ENCODE measurements at regions of chr17 and their contacts with region 1.

Region 1: DNA sequence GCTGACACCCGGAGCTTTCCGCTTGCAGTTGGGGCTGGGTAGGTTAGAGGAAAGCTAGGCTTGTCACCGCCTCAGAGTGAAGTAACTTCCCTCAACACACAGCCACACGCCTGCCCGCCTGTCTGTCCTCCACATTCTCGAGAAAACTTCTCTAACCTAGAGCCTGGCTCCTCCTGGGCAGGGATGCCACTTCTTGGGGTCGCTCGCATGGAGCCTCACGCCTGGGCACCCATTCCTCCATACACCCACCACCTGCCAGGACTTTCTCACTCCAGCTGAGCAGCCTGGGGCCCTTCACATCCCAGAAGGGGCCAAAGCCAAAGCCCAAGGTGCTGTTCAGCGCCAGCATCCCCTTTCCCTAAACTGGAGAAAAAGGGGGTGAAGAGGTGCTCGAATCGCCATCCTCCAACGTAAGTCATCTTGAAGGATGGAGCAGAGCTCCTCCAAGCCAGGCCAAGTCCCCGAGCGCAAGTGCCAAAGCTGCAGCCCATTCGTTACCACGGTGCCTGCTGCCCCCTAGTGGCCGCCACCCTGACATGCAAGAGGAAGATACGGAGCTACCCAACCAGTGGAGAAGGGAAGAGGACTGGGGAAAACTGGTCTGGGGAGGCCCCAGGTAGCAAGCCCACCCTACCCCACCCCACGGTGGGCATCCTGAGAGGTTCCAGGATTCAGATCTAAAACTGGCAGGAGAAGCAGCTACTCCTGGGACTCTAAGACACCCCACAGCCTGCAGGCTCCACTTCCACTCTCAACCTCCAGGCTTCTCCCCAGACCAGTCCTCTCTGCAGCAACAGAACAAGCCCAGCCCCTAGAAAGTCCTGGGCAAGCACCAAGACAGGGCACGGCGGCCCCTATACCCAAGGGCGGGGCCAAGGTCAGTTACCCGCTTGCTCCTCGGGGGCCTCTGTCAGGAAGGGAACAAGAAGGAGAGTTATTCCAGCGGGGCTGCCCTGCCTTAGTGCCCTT is 63.1 kb downstream of the MYO18A start:
- DNase-seq: peak; percentile 93
- ATAC-seq: peak; percentile 72
- H3K4me3 Mint-ChIP-seq: no peak overlapping the region
- H3K27ac Mint-ChIP-seq: no peak overlapping the region
- H3K4me1 Mint-ChIP-seq: peaks cover 9% of the 10 kb centered on the region
- H3K27me3 Mint-ChIP-seq: no peaks in the 10 kb centered on the region
- CTCF ChIP-seq: peak; percentile 98

Region 2: GRCh38 chr17:28726226-28727130 is 390.6 kb before region 1 on chr17 and contains the start of gene TLCD1:
- CTCF ChIA-PET with region 1: interaction called, 47 read pairs
- POLR2A ChIA-PET with region 1: interaction called, 3 read pairs
- DNase-seq: peak; percentile 99
- ATAC-seq: peak; percentile 29
- H3K4me3 Mint-ChIP-seq: peak within 1 kb of the TSS; percentile 93
- H3K27ac Mint-ChIP-seq: peak within 1 kb of the TSS; percentile 99
- H3K4me1 Mint-ChIP-seq: peaks cover 44% of the 10 kb centered on the region
- H3K27me3 Mint-ChIP-seq: no peaks in the 10 kb centered on the region
- CTCF ChIP-seq: peak; percentile 96
- total RNA-seq, gene TLCD1: 36.0 to 41.2 TPM (median 36.5 TPM) in 3 replicates

Region 3: DNA sequence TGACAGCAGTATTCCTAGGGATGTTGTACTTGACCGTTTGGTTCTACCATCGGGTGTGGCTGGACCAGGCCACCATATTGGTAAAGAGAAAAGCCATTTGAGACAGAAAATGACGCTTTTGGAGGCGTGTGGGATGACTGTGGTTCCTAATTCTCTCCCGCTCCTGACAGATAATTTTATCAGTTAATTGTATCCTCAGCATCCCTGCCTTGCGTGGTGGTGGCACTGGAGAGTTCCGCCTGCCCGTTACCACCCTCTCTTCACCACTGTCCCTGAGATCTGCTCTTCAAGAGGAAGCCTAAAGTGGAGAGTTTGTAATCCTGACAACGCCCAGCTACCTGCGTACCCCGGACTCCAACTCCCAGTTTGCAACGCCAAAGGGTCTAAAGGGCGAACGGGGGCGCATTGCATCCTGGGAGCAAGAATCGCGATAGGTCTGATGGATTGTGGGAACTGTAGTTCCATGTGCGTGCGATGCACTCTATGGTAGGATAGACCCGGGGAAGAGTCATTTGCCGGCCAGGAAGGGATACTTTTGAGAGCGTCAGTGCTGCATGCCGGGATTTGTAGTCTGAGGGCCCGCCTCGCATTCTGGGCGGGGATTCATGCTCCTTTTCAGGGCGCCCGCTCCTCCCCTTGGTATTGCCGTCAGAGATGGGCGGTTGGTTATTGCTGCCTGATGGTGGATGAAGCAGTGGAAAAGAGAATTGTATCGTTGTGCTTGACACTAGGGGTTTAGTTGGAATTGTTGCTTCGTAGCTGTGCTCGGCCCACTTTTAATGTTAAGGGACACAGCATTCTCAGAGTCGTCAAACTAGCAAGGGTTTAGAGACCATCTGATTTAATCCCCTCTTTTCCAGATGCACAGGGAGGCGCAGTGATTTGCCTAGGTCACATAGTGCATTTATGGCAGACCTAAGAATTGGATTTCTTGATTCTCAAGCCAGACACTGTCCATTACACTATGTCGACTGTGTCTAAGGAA is 164.8 kb before region 1 on chr17:
- CTCF ChIA-PET with region 1: interaction called, 762 read pairs
- POLR2A ChIA-PET with region 1: no interaction called
- DNase-seq: peak; percentile 94
- ATAC-seq: peak; percentile 74
- H3K4me3 Mint-ChIP-seq: no peak overlapping the region
- H3K27ac Mint-ChIP-seq: no peak overlapping the region
- H3K4me1 Mint-ChIP-seq: peaks cover 28% of the 10 kb centered on the region
- H3K27me3 Mint-ChIP-seq: no peaks in the 10 kb centered on the region
- CTCF ChIP-seq: no peak

Region 4: GRCh38 chr17:28992625-28993600 is 124.2 kb before region 1 on chr17:
- CTCF ChIA-PET with region 1: interaction called, 228 read pairs
- POLR2A ChIA-PET with region 1: no interaction called
- DNase-seq: no peak
- ATAC-seq: no peak
- H3K4me3 Mint-ChIP-seq: no peak overlapping the region
- H3K27ac Mint-ChIP-seq: no peak overlapping the region
- H3K4me1 Mint-ChIP-seq: peaks cover 18% of the 10 kb centered on the region
- H3K27me3 Mint-ChIP-seq: peaks cover 23% of the 10 kb centered on the region
- CTCF ChIP-seq: no peak

Region 5: GRCh38 chr17:29048440-29049368 is 68.4 kb before region 1 on chr17:
- CTCF ChIA-PET with region 1: interaction called, 27 read pairs
- POLR2A ChIA-PET with region 1: no interaction called
- DNase-seq: no peak
- ATAC-seq: peak; percentile 58
- H3K4me3 Mint-ChIP-seq: no peak overlapping the region
- H3K27ac Mint-ChIP-seq: 0 out of 2 replicates have a peak overlapping the region, but pooled peaks have one; percentile 5
- H3K4me1 Mint-ChIP-seq: peaks cover 51% of the 10 kb centered on the region
- H3K27me3 Mint-ChIP-seq: no peaks in the 10 kb centered on the region
- CTCF ChIP-seq: no peak

Region 6: GRCh38 chr17:29084541-29085146 is 32.4 kb before region 1 on chr17:
- CTCF ChIA-PET with region 1: interaction called, 51 read pairs
- POLR2A ChIA-PET with region 1: no interaction called
- DNase-seq: no peak
- ATAC-seq: peak; percentile 19
- H3K4me3 Mint-ChIP-seq: no peak overlapping the region
- H3K27ac Mint-ChIP-seq: peak overlapping the region; percentile 5; the same call in 1 of the 2 replicates
- H3K4me1 Mint-ChIP-seq: peaks cover 43% of the 10 kb centered on the region
- H3K27me3 Mint-ChIP-seq: no peaks in the 10 kb centered on the region
- CTCF ChIP-seq: no peak

Region 7: DNA sequence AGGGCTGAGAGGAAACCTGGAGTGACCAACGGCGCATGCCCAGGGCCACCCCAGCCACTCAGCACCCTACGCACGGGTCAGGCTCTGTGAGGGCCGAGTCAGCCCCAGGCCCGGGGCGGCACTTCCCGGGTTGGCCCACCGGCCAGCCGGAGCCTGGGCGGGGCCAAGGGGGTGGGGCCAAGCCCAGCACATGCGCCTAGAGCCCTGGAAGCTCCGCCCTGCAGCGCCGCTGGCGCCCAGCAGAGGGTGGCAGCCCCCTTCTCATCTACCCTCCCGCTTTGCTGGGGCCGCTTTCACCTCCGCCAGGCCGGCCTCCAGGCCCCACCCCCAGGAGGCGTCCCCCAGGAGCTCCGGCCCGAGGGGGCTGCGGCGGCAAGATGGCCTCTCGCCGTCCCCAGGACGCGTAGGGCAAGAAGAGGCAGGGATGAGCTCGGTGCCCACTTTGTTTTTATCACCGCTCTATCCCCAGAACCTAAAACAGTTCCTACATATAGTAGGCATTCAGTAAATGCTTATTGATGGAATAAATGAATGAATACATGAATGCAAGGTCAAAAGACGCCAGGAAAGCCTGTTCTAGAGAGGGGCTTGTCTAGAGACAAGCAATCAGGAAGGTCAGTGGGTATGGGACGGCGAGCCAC is 31.8 kb after region 1 on chr17:
- CTCF ChIA-PET with region 1: interaction called, 269 read pairs
- POLR2A ChIA-PET with region 1: interaction called, 6 read pairs
- DNase-seq: peak; percentile 98
- ATAC-seq: peak; percentile 94
- H3K4me3 Mint-ChIP-seq: peak overlapping the region; percentile 72
- H3K27ac Mint-ChIP-seq: peak overlapping the region; percentile 95
- H3K4me1 Mint-ChIP-seq: peaks cover 38% of the 10 kb centered on the region
- H3K27me3 Mint-ChIP-seq: no peaks in the 10 kb centered on the region
- CTCF ChIP-seq: peak; percentile 89

Region 8: GRCh38 chr17:29273924-29274323 is 156.8 kb after region 1 on chr17:
- CTCF ChIA-PET with region 1: no interaction called
- POLR2A ChIA-PET with region 1: no interaction called
- DNase-seq: no peak
- ATAC-seq: no peak
- H3K4me3 Mint-ChIP-seq: no peak overlapping the region
- H3K27ac Mint-ChIP-seq: peak overlapping the region; percentile 81
- H3K4me1 Mint-ChIP-seq: peaks cover 38% of the 10 kb centered on the region
- H3K27me3 Mint-ChIP-seq: no peaks in the 10 kb centered on the region
- CTCF ChIP-seq: no peak

Measured in WTC11 (cell line).